Endothelial cell of umbilical vein (primary cell): ENCODE measurements at regions of chr2 and their contacts with region 1.

Region 1: GRCh38 chr2:189580658-189581353 is at the start of gene SLC40A1:
- DNase-seq: peak; percentile 86
- H3K4me3 ChIP-seq: peak within 1 kb of the TSS; percentile 53 to 79 (median 75)
- H3K27ac ChIP-seq: no peak within 1 kb of the TSS
- H3K4me1 ChIP-seq: peaks cover 13% of the 10 kb centered on the region
- H3K27me3 ChIP-seq: no peaks in the 10 kb centered on the region
- CTCF ChIP-seq: no peak
- POLR2A ChIP-seq: peak; percentile 65
- total RNA-seq, gene SLC40A1: 5.7 and 8.5 TPM in 2 replicates

Region 2: DNA sequence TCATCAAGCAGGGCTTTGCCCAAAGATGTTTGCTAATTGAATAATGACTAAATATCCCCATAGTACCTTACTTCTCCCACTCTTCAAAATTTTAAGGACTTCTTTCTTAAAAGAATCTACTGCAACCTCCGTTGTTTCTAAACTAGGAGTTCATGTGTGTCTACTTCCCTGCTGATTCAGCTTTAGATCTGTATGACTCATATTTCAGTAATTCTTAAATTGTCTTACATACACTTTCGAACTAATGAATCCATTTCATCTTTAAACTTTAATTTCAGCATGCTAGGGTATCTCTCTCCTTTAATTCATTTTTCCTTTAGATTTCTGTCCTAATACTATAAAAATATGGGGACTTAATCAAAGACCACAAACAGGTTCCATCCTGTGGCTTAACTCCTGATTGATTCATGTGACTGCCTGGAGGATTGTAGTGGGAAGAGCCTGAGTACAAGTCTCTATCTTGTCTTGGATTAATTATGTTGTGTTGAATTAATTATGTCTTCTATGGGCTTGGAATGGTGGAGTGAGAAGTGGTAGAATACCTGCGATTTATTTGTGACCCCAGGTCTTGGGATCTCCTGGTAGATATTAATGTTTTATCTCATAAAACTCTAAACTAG is 376.4 kb before region 1 on chr2:
- CTCF ChIA-PET with region 1: no interaction called
- POLR2A ChIA-PET with region 1: no interaction called
- dilution Hi-C with region 1: no loop called
- intact Hi-C with region 1: no loop called
- DNase-seq: peak; percentile 43
- H3K4me3 ChIP-seq: peak overlapping the region in 1 of 3 experiments; percentile 10
- H3K27ac ChIP-seq: peak overlapping the region; percentile 28
- H3K4me1 ChIP-seq: peaks cover 22% of the 10 kb centered on the region
- H3K27me3 ChIP-seq: no peaks in the 10 kb centered on the region
- CTCF ChIP-seq: no peak
- POLR2A ChIP-seq: no peak

Region 3: GRCh38 chr2:189440947-189441708 is 139.7 kb before region 1 on chr2 and contains the start of gene WDR75:
- CTCF ChIA-PET with region 1: no interaction called
- POLR2A ChIA-PET with region 1: interaction called, 4 read pairs
- dilution Hi-C with region 1: no loop called
- intact Hi-C with region 1: loop called (anchors 1 kb)
- DNase-seq: peak; percentile 95
- H3K4me3 ChIP-seq: peak within 1 kb of the TSS; percentile 88 to 95 (median 93)
- H3K27ac ChIP-seq: peak within 1 kb of the TSS; percentile 77
- H3K4me1 ChIP-seq: peaks cover 16% of the 10 kb centered on the region
- H3K27me3 ChIP-seq: no peaks in the 10 kb centered on the region
- CTCF ChIP-seq: no peak
- POLR2A ChIP-seq: peak; percentile 95
- total RNA-seq, gene WDR75: 41.7 and 44.8 TPM in 2 replicates

Region 4: GRCh38 chr2:189569295-189569910 is 11.4 kb before region 1 on chr2:
- CTCF ChIA-PET with region 1: interaction called, 10 read pairs
- POLR2A ChIA-PET with region 1: no interaction called
- dilution Hi-C with region 1: no loop called
- intact Hi-C with region 1: no loop called
- DNase-seq: peak; percentile 95
- H3K4me3 ChIP-seq: no peak overlapping the region
- H3K27ac ChIP-seq: no peak overlapping the region
- H3K4me1 ChIP-seq: peaks cover 6% of the 10 kb centered on the region
- H3K27me3 ChIP-seq: no peaks in the 10 kb centered on the region
- CTCF ChIP-seq: peak in 1 of 2 donors; percentile 21
- POLR2A ChIP-seq: no peak

Region 5: DNA sequence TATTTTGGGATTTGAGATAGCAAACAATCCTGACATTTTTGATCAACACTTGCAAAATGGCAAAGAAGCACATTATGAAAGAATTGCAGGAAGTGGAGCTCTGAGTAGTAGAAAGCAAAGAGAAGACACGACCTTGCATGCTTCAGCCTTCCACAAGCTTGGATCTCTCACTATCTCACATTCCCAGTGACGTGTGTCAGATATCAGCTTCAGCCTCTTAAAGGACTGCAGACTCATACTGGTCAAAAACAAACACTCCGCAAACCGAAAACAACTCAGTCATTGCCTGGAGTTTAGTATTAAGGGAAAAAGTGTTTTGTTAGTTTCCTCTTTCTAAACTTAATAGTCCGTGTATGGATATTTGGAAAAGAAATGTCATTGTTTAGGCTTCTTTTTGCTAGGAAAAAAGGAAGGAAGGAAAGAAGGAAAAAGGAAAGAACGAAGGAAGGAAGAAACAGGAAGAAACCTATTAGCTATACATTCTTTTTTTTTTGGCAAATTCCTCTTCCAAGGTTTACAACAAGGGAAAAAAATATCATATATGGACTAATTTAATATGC is 32.4 kb after region 1 on chr2:
- CTCF ChIA-PET with region 1: interaction called, 5 read pairs
- POLR2A ChIA-PET with region 1: interaction called, 9 read pairs
- dilution Hi-C with region 1: no loop called
- intact Hi-C with region 1: loop called (anchors 2 kb)
- DNase-seq: peak; percentile 98
- H3K4me3 ChIP-seq: peak overlapping the region in 2 of 3 experiments; percentile 12 to 66
- H3K27ac ChIP-seq: peak overlapping the region; percentile 74
- H3K4me1 ChIP-seq: peaks cover 17% of the 10 kb centered on the region
- H3K27me3 ChIP-seq: no peaks in the 10 kb centered on the region
- CTCF ChIP-seq: no peak
- POLR2A ChIP-seq: peak; percentile 42